BJ (cell line): ENCODE measurements at regions of chr6 and their contacts with region 1.

Region 1: DNA sequence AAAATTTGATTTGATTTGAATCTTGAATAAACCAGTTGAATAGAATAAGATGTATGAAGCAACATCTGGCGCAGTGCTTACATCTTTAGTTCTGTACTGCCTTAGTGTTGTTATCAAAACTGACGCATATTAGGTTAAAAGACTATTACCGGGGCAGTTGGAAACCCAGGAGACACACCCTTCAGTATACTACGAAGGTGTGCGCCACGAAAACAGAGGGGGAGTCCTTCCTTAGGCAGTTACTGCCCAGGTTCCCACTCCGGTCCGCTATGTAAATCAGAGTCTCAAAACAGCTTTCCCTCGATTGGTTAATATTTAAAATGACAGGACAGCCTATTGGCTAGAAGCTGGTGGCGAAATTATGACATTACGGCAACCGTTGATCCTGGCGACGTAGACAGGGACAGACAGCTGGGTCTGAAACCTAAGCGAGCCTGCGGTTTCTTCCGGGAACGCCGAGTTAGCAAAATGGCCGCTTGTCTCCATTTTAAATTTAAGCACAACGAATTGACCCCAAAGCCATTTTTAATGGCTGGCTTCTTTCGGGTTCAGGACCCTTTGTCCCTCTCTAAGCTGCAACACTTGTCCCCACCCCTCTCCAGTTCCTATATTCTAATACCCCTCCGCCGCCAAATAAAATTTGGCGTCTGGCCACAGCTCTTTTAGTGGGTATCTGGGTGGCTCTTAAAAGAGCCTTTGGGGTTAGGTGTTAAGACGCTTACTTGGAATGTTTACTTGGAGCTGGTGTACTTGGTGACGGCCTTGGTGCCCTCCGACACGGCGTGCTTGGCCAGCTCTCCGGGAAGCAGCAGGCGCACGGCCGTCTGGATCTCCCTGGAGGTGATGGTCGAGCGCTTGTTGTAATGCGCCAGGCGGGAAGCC is 35.8 kb downstream of the HFE start:
- DNase-seq: peak; percentile 98
- H3K4me3 ChIP-seq: peak overlapping the region; percentile 59
- H3K27me3 ChIP-seq: no peaks in the 10 kb centered on the region
- CTCF ChIP-seq: no peak

Region 2: DNA sequence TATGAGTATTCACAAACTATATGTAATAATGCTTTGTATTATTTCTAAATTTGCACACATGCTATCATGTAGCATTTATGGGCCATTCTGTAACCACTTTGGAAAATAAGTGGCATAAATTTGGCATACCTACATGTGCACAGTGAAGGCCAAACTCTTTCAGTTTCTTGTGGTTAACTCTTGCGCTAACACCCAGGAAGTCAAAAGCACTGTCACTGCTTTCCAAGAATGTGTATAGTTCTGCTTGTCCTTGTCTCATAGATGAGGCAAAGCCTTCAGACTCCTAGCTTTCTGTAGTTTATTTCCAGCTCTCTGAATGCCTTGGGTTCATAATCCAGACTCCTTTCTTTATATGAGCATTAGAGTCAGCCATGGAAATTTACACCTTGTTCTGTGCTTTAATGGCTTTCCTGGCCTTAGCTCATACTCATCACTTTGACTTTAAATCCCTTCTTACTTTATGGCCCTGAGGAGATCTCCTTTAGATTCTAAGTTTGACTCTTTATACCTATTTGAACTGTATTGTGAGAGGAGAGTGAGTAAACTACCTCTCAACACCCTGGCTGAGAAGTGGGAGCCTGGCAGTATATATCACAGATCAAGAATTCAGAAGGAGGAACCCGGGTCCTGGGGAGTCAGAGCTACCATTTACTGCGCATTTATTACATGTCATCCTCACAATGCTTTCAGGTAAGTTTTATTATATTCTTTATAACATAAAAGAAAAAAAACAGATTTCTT is 248.0 kb before region 1 on chr6:
- CTCF ChIA-PET with region 1: no interaction called
- POLR2A ChIA-PET with region 1: no interaction called
- DNase-seq: no peak
- H3K4me3 ChIP-seq: no peak overlapping the region
- H3K27me3 ChIP-seq: no peaks in the 10 kb centered on the region
- CTCF ChIP-seq: no peak

Region 3: DNA sequence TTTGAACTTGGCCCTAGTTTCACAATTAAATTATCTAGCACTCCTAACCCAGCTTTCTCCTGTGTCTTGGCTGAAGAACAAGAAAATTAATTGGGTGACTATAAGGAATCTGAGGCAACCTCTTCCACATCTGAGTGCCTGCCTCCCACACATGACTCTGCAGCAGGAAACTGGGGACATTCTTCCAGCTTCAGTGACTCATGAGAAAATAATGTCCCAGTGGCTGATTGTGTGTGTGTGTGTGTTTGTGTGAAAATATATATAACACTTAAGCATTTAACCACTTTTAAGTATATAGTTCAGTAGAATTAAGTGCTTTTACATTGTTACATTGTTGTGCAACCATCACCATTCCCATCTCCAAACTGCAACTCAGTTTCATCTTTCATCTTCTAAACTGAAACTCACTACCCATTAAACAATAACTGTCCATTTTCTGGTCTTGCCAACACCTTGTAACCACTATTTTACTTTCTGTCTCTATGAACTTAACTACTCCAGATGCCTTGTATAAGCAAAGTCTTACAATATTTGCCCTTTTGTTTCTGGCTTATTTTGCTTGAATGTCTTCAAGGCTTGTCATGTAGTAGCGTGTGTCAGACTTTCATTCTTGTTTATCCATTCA is 151.7 kb before region 1 on chr6:
- CTCF ChIA-PET with region 1: no interaction called
- POLR2A ChIA-PET with region 1: no interaction called
- DNase-seq: peak; percentile 86
- H3K4me3 ChIP-seq: no peak overlapping the region
- H3K27me3 ChIP-seq: no peaks in the 10 kb centered on the region
- CTCF ChIP-seq: no peak

Region 4: GRCh38 chr6:26025894-26026832 is 96.9 kb before region 1 on chr6:
- CTCF ChIA-PET with region 1: interaction called, 4 read pairs
- POLR2A ChIA-PET with region 1: interaction called, 10 read pairs
- DNase-seq: peak; percentile 78
- H3K4me3 ChIP-seq: peak overlapping the region; percentile 64
- H3K27me3 ChIP-seq: no peaks in the 10 kb centered on the region
- CTCF ChIP-seq: peak; percentile 95

Region 5: GRCh38 chr6:26045065-26045927 is 77.7 kb before region 1 on chr6:
- CTCF ChIA-PET with region 1: no interaction called
- POLR2A ChIA-PET with region 1: interaction called, 49 read pairs
- DNase-seq: peak; percentile 87
- H3K4me3 ChIP-seq: peak overlapping the region; percentile 51
- H3K27me3 ChIP-seq: no peaks in the 10 kb centered on the region
- CTCF ChIP-seq: peak; percentile 30; the same call in 1 of the 2 replicates

Region 6: DNA sequence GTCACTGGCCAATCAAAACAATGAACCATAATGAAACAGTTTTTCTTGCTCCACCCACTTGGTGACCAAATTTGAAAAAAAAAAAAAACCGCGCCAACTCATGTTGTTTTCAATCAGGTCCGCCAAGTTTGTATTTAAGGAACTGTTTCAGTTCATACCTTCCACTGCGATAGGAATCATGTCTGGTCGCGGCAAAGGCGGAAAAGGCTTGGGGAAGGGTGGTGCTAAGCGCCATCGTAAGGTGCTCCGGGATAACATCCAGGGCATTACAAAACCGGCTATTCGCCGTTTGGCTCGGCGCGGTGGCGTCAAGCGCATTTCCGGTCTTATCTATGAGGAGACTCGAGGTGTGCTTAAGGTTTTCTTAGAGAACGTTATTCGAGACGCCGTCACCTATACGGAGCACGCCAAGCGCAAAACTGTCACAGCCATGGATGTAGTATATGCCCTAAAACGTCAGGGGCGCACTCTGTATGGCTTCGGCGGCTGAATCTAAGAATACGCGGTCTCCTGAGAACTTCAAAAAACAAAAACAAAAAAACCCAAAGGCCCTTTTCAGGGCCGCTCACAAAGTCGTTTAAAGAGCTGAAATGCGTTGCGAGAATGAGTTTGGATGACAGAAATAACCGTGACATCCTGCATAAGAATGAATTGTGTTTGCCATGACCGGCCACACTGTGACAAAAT is 19.1 kb before region 1 on chr6:
- CTCF ChIA-PET with region 1: interaction called, 4 read pairs
- POLR2A ChIA-PET with region 1: interaction called, 28 read pairs
- DNase-seq: peak; percentile 83
- H3K4me3 ChIP-seq: peak overlapping the region; percentile 43
- H3K27me3 ChIP-seq: no peaks in the 10 kb centered on the region
- CTCF ChIP-seq: peak; percentile 61

Region 7: GRCh38 chr6:26183581-26184366 is 60.7 kb after region 1 on chr6:
- CTCF ChIA-PET with region 1: no interaction called
- POLR2A ChIA-PET with region 1: interaction called, 21 read pairs
- DNase-seq: peak; percentile 92
- H3K4me3 ChIP-seq: peak overlapping the region; percentile 32
- H3K27me3 ChIP-seq: no peaks in the 10 kb centered on the region
- CTCF ChIP-seq: no peak

Region 8: DNA sequence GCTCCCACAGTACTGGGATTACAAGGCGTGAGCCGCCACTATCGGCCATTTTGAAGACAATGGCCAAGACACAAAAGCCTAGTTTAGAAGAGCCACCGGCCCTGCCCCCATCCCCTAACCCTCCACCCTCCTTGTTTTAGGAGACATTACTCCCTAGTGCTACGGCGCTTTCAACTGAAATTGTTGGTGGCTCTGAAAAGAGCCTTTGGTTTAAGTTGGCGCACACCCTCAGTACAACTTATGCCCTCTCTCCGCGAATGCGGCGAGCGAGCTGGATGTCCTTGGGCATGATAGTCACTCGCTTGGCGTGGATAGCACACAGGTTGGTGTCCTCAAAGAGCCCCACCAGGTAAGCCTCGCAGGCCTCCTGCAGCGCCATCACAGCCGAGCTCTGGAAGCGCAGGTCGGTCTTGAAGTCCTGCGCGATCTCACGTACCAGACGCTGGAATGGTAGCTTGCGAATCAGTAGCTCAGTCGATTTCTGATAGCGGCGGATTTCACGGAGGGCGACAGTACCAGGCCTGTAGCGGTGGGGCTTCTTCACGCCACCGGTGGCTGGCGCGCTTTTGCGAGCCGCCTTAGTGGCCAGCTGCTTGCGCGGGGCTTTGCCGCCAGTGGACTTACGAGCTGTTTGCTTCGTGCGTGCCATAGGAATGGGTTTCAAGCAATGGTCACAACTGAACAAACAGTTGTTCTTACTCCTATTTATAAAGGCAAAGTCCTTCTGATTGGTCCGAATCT is 127.1 kb after region 1 on chr6:
- CTCF ChIA-PET with region 1: no interaction called
- POLR2A ChIA-PET with region 1: no interaction called
- DNase-seq: no peak
- H3K4me3 ChIP-seq: peak overlapping the region; percentile 51
- H3K27me3 ChIP-seq: no peaks in the 10 kb centered on the region
- CTCF ChIP-seq: peak; percentile 52

Region 9: DNA sequence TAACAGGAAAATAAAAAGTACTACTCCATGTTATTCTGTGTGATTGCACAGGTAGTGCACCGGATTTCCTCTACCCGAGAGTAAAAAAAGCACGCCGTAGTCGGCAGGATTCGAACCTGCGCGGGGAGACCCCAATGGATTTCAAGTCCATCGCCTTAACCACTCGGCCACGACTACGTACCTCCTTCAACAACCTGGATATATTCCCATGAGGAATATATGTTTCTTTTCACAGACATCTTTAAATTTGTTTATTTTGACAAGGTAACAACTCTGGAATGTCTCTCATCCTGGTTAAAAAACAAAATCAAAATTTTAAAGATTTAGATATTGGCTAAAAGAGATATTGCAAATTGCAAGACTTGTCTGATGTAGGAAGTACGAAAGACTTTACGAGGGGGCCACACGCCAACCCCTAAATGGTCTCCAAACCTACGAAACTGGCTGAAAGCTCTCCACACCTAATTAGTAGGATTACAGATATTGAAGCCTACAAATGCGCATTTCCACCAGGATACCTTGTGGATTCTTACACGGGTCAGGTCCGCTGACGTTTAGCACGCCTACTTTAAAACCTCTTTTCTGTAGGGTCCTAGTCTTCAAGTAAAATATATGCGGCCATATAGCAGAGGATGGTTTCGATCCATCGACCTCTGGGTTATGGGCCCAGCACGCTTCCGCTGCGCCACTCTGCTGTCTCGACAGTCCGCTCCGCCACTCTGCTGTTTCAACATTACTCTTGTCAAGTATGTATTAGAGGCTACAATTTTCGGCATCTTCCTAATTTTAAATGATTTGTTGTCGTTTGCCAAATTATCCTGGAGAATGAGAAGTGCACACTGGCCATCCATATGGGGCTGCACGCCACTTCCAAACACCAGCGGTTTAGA is 189.7 kb after region 1 on chr6:
- CTCF ChIA-PET with region 1: no interaction called
- POLR2A ChIA-PET with region 1: no interaction called
- DNase-seq: no peak
- H3K4me3 ChIP-seq: peak overlapping the region; percentile 45
- H3K27me3 ChIP-seq: no peaks in the 10 kb centered on the region
- CTCF ChIP-seq: no peak

Region 10: GRCh38 chr6:27864906-27865849 is 1742.1 kb after region 1 on chr6:
- CTCF ChIA-PET with region 1: no interaction called
- POLR2A ChIA-PET with region 1: interaction called, 21 read pairs
- DNase-seq: peak; percentile 93
- H3K4me3 ChIP-seq: peak overlapping the region; percentile 60
- H3K27me3 ChIP-seq: no peaks in the 10 kb centered on the region
- CTCF ChIP-seq: no peak